B cell (primary cell): ENCODE measurements at regions of chr7 and their contacts with region 1.

Region 1: GRCh38 chr7:36708767-36709166 is 15.5 kb downstream of the AOAH start:
- DNase-seq: no peak
- ATAC-seq: no peak
- H3K4me3 ChIP-seq: no peak overlapping the region
- H3K4me3 Mint-ChIP-seq: no peak overlapping the region
- H3K27ac ChIP-seq: no peak overlapping the region
- H3K27ac Mint-ChIP-seq: no peak overlapping the region
- H3K4me1 ChIP-seq: no peaks in the 10 kb centered on the region
- H3K4me1 Mint-ChIP-seq: no peaks in the 10 kb centered on the region
- H3K27me3 ChIP-seq: no peaks in the 10 kb centered on the region
- H3K27me3 Mint-ChIP-seq: peaks cover 8% of the 10 kb centered on the region
- CTCF ChIP-seq: no peak

Region 2: GRCh38 chr7:36303202-36304098 is 405.3 kb before region 1 on chr7:
- CTCF ChIA-PET with region 1: no interaction called
- POLR2A ChIA-PET with region 1: no interaction called
- intact Hi-C with region 1: no loop called
- DNase-seq: no peak
- ATAC-seq: no peak
- H3K4me3 ChIP-seq: no peak overlapping the region
- H3K4me3 Mint-ChIP-seq: no peak overlapping the region
- H3K27ac ChIP-seq: no peak overlapping the region
- H3K27ac Mint-ChIP-seq: no peak overlapping the region
- H3K4me1 ChIP-seq: no peaks in the 10 kb centered on the region
- H3K4me1 Mint-ChIP-seq: no peaks in the 10 kb centered on the region
- H3K27me3 ChIP-seq: no peaks in the 10 kb centered on the region
- H3K27me3 Mint-ChIP-seq: no peaks in the 10 kb centered on the region
- CTCF ChIP-seq: no peak

Region 3: GRCh38 chr7:36406156-36406555 is 302.6 kb before region 1 on chr7:
- CTCF ChIA-PET with region 1: no interaction called
- POLR2A ChIA-PET with region 1: no interaction called
- intact Hi-C with region 1: no loop called
- DNase-seq: no peak
- ATAC-seq: no peak
- H3K4me3 ChIP-seq: no peak overlapping the region
- H3K4me3 Mint-ChIP-seq: no peak overlapping the region
- H3K27ac ChIP-seq: no peak overlapping the region
- H3K27ac Mint-ChIP-seq: no peak overlapping the region
- H3K4me1 ChIP-seq: no peaks in the 10 kb centered on the region
- H3K4me1 Mint-ChIP-seq: no peaks in the 10 kb centered on the region
- H3K27me3 ChIP-seq: no peaks in the 10 kb centered on the region
- H3K27me3 Mint-ChIP-seq: no peaks in the 10 kb centered on the region
- CTCF ChIP-seq: no peak

Region 4: DNA sequence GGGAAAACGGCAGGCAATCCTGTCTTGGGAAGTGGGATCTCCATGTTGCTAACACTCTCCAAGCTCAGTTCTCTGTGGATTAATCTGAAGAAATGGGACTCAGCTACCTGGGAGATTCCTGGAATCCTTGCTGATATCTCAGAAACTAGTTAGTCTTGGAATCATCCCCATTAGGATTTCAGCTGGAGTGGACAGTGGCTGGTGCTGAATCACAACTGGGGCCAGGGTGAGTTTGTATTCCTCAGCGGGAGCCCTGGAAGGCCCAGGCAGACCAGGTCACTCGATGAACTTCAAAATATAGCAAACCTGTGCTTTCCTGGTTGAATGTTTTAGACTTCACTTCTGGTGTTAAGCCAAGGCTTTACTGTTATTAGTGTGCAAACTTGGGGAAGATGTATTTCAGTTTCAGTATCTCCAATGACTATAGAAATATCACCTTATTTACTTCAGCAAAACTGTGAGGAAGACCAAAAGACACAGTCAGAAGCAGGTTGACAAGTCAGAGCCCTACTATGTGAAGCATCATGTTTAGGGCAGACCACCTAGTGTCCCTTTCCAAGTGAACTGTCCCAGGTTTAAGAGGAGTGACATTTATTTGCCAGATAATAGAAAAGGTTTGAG is 110.6 kb before region 1 on chr7:
- CTCF ChIA-PET with region 1: no interaction called
- POLR2A ChIA-PET with region 1: no interaction called
- intact Hi-C with region 1: no loop called
- DNase-seq: no peak
- ATAC-seq: no peak
- H3K4me3 ChIP-seq: no peak overlapping the region
- H3K4me3 Mint-ChIP-seq: no peak overlapping the region
- H3K27ac ChIP-seq: no peak overlapping the region
- H3K27ac Mint-ChIP-seq: no peak overlapping the region
- H3K4me1 ChIP-seq: no peaks in the 10 kb centered on the region
- H3K4me1 Mint-ChIP-seq: no peaks in the 10 kb centered on the region
- H3K27me3 ChIP-seq: no peaks in the 10 kb centered on the region
- H3K27me3 Mint-ChIP-seq: peaks cover 8% of the 10 kb centered on the region
- CTCF ChIP-seq: no peak

Region 5: DNA sequence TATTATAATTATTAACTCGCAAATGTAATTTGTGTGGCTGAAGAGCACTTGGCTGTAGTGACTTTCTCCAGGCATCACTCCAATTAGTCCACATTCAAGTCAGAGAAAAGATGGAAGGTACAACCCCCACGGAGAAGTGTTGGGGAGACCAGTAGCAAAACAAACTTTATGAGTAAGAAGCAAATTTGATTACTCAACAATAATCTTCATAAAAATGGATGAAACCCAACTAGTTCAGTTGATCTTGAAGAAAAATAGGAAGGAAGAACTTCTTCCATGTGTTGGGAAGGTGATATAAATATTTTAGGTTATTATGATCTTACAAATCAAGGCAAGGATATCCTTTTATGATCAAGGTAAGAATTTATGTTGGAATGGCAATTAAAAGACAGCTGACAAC is 10.5 kb after region 1 on chr7:
- CTCF ChIA-PET with region 1: interaction called, 10 read pairs
- POLR2A ChIA-PET with region 1: no interaction called
- intact Hi-C with region 1: no loop called
- DNase-seq: no peak
- ATAC-seq: no peak
- H3K4me3 ChIP-seq: no peak overlapping the region
- H3K4me3 Mint-ChIP-seq: no peak overlapping the region
- H3K27ac ChIP-seq: no peak overlapping the region
- H3K27ac Mint-ChIP-seq: no peak overlapping the region
- H3K4me1 ChIP-seq: peaks cover 4 to 5% of the 10 kb centered on the region in 2 donors
- H3K4me1 Mint-ChIP-seq: peaks cover 19% of the 10 kb centered on the region
- H3K27me3 ChIP-seq: no peaks in the 10 kb centered on the region
- H3K27me3 Mint-ChIP-seq: no peaks in the 10 kb centered on the region
- CTCF ChIP-seq: no peak